ENCODE measurements at regions of chr7 and their contacts with region 1.

Region 1: GRCh38 chr7:636396-636795 is 90.1 kb upstream of the DNAAF5 start:
- DNase-seq: peak; percentile 61
- H3K4me3 Mint-ChIP-seq: no peak overlapping the region
- H3K27ac Mint-ChIP-seq: no peak overlapping the region
- H3K4me1 Mint-ChIP-seq: peaks cover 12% of the 10 kb centered on the region
- H3K27me3 Mint-ChIP-seq: no peaks in the 10 kb centered on the region

Region 2: GRCh38 chr7:620052-620451 is 16.3 kb before region 1 on chr7:
- CTCF ChIA-PET with region 1: interaction called, 3 read pairs
- POLR2A ChIA-PET with region 1: no interaction called
- intact Hi-C with region 1: loop called (anchors 2 kb)
- DNase-seq: peak; percentile 29
- H3K4me3 Mint-ChIP-seq: no peak overlapping the region
- H3K27ac Mint-ChIP-seq: peak overlapping the region; percentile 97
- H3K4me1 Mint-ChIP-seq: peaks cover 43% of the 10 kb centered on the region
- H3K27me3 Mint-ChIP-seq: no peaks in the 10 kb centered on the region

Region 3: DNA sequence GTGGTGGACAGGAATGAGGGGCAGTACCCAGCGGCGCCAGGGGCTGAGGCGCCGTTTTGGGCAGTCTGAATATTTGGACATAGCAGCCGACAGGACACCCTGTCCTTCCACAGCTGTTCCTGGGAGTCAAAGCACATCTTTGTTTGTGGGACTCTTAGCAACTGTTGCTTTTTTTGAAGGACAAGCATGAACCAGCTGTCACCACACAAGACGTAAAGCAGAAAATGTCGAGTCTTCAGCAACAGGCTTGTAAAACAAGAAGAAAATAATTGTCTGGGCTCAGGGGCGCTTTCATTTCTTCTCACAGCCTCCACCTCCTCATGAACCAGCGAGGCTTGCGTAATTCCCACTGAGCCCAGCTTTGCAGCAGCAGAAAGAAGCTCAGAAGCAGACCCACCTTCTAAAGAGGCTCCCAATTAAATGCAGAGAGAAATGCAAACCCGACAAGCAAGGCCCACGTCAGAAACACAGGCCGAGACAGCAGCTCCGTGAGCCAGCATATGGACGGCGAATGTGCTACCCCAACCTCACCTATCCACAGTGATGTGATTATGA is 21.2 kb after region 1 on chr7:
- CTCF ChIA-PET with region 1: no interaction called
- POLR2A ChIA-PET with region 1: no interaction called
- intact Hi-C with region 1: no loop called
- DNase-seq: no peak
- H3K4me3 Mint-ChIP-seq: no peak overlapping the region
- H3K27ac Mint-ChIP-seq: no peak overlapping the region
- H3K4me1 Mint-ChIP-seq: peaks cover 3% of the 10 kb centered on the region
- H3K27me3 Mint-ChIP-seq: no peaks in the 10 kb centered on the region

Region 4: GRCh38 chr7:786472-787255 is 150.3 kb after region 1 on chr7:
- CTCF ChIA-PET with region 1: no interaction called
- POLR2A ChIA-PET with region 1: no interaction called
- intact Hi-C with region 1: no loop called
- DNase-seq: peak; percentile 80
- H3K4me3 Mint-ChIP-seq: no peak overlapping the region
- H3K27ac Mint-ChIP-seq: no peak overlapping the region
- H3K4me1 Mint-ChIP-seq: no peaks in the 10 kb centered on the region
- H3K27me3 Mint-ChIP-seq: no peaks in the 10 kb centered on the region

Measured in activated CD4-positive, alpha-beta memory T cell treated with anti-CD3 and anti-CD28 coated beads for 36 hours (primary cell).